Activated B cell treated with CpG ODN at 0.5 μM for 24 hours (primary cell): ENCODE measurements at regions of chr17 and their contacts with region 1.

Region 1: GRCh38 chr17:64331946-64332493 is 58.6 kb downstream of the PECAM1 start:
- DNase-seq: no peak
- ATAC-seq: no peak
- H3K4me3 Mint-ChIP-seq: no peak overlapping the region
- H3K27ac Mint-ChIP-seq: no peak overlapping the region
- H3K4me1 Mint-ChIP-seq: peaks cover 9% of the 10 kb centered on the region
- H3K27me3 Mint-ChIP-seq: no peaks in the 10 kb centered on the region
- CTCF ChIP-seq: no peak

Region 2: GRCh38 chr17:66228887-66229782 is 1897.1 kb after region 1 on chr17 and contains the start of gene APOH:
- CTCF ChIA-PET with region 1: no interaction called
- POLR2A ChIA-PET with region 1: interaction called, 10 read pairs
- intact Hi-C with region 1: no loop called
- DNase-seq: no peak
- ATAC-seq: no peak
- H3K4me3 Mint-ChIP-seq: no peak within 1 kb of the TSS
- H3K27ac Mint-ChIP-seq: no peak within 1 kb of the TSS
- H3K4me1 Mint-ChIP-seq: no peaks in the 10 kb centered on the region
- H3K27me3 Mint-ChIP-seq: peaks cover 12% of the 10 kb centered on the region
- CTCF ChIP-seq: no peak
- total RNA-seq, gene APOH: not detected in 2 replicates